Caco-2 (cell line): ENCODE measurements at regions of chr17 and their contacts with region 1.

Region 1: GRCh38 chr17:81927653-81928543 is at the start of gene MAFG:
- DNase-seq: peak; percentile 90 to 94
- H3K4me3 ChIP-seq: peak within 1 kb of the TSS; percentile 89
- H3K4me3 Mint-ChIP-seq: peak within 1 kb of the TSS; percentile 77
- H3K27ac Mint-ChIP-seq: peak within 1 kb of the TSS; percentile 85
- H3K4me1 ChIP-seq: peaks cover 14% of the 10 kb centered on the region
- H3K4me1 Mint-ChIP-seq: peaks cover 24% of the 10 kb centered on the region
- H3K27me3 ChIP-seq: no peaks in the 10 kb centered on the region
- H3K27me3 Mint-ChIP-seq: no peaks in the 10 kb centered on the region
- CTCF ChIP-seq: peak; percentile 22 to 26
- total RNA-seq, gene MAFG: 28.9 and 29.1 TPM in 2 replicates

Region 2: DNA sequence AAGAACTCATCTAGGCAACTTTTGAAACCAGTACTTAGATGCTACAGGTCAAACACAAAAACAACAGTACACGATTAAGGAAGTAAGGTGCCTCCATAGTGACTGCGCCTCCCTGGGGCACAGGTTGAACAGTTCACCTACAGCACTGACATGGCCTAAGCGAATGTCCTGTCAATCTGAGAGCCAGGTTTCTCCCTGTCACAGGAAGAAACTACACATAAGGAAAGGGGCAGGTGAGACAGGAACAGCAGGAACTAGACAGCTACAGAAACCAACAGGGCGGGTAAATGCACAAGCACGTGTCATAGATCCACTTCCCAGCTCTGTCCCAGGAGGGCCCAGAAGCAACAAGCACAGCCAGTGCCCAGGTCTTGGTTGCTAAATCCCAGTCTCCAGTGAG is 48.8 kb before region 1 on chr17:
- CTCF ChIA-PET with region 1: no interaction called
- POLR2A ChIA-PET with region 1: no interaction called
- intact Hi-C with region 1: no loop called
- DNase-seq: no peak
- H3K4me3 ChIP-seq: no peak overlapping the region
- H3K4me3 Mint-ChIP-seq: no peak overlapping the region
- H3K27ac Mint-ChIP-seq: no peak overlapping the region
- H3K4me1 ChIP-seq: no peaks in the 10 kb centered on the region
- H3K4me1 Mint-ChIP-seq: no peaks in the 10 kb centered on the region
- H3K27me3 ChIP-seq: no peaks in the 10 kb centered on the region
- H3K27me3 Mint-ChIP-seq: no peaks in the 10 kb centered on the region
- CTCF ChIP-seq: no peak

Region 3: DNA sequence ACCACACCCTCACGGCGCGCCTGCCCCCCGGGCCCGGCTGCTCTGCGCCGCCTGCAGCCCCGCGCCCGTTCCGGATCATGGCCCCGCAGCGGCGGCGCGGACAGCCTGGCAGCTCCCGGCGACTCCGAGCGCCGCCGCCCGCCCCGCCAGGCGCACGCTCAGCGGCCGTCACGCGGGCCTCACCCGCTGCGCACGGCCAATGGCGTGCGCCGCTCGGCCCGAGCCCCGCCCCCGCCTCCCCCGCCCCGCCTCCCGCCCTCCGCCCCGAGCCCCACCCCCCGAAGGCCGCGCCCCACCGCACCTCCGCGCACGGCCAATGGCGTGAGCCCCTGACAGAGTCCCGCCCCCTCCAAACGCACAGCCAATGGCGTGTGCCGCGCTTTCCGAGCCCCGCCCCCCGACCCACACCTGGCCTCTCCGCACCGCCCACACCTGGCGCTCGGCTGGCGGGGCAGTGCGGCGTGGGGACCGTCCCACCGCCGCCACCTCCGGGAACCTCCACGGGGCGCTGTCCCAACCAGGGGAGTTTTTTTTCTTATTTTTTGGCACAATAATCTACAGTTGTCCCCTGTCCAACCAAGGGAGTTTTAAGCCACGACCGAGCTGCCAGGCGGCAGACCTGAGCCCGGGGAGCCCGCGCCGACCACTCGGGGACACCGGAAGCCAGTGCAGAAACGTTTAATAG is 16.5 kb before region 1 on chr17 and contains the start of gene PCYT2:
- CTCF ChIA-PET with region 1: interaction called, 11 read pairs
- POLR2A ChIA-PET with region 1: interaction called, 7 read pairs
- intact Hi-C with region 1: loop called (anchors 2 kb)
- DNase-seq: peak; percentile 97 to 98
- H3K4me3 ChIP-seq: peak within 1 kb of the TSS; percentile 99
- H3K4me3 Mint-ChIP-seq: peak within 1 kb of the TSS; percentile 89
- H3K27ac Mint-ChIP-seq: peak within 1 kb of the TSS; percentile 94
- H3K4me1 ChIP-seq: peaks cover 19% of the 10 kb centered on the region
- H3K4me1 Mint-ChIP-seq: peaks cover 19% of the 10 kb centered on the region
- H3K27me3 ChIP-seq: no peaks in the 10 kb centered on the region
- H3K27me3 Mint-ChIP-seq: no peaks in the 10 kb centered on the region
- CTCF ChIP-seq: peak; percentile 31 to 45
- total RNA-seq, gene PCYT2: 125 and 151 TPM in 2 replicates

Region 4: GRCh38 chr17:81917565-81918332 is 10.1 kb before region 1 on chr17 and contains the start of gene SIRT7:
- CTCF ChIA-PET with region 1: interaction called, 11 read pairs
- POLR2A ChIA-PET with region 1: interaction called, 11 read pairs
- intact Hi-C with region 1: loop called (anchors 1 kb)
- DNase-seq: peak; percentile 77 to 84
- H3K4me3 ChIP-seq: peak within 1 kb of the TSS; percentile 86
- H3K4me3 Mint-ChIP-seq: peak within 1 kb of the TSS; percentile 93
- H3K27ac Mint-ChIP-seq: peak within 1 kb of the TSS; percentile 90
- H3K4me1 ChIP-seq: peaks cover 11% of the 10 kb centered on the region
- H3K4me1 Mint-ChIP-seq: peaks cover 28% of the 10 kb centered on the region
- H3K27me3 ChIP-seq: no peaks in the 10 kb centered on the region
- H3K27me3 Mint-ChIP-seq: no peaks in the 10 kb centered on the region
- CTCF ChIP-seq: no peak
- total RNA-seq, gene SIRT7: 55.6 and 57.4 TPM in 2 replicates

Region 5: DNA sequence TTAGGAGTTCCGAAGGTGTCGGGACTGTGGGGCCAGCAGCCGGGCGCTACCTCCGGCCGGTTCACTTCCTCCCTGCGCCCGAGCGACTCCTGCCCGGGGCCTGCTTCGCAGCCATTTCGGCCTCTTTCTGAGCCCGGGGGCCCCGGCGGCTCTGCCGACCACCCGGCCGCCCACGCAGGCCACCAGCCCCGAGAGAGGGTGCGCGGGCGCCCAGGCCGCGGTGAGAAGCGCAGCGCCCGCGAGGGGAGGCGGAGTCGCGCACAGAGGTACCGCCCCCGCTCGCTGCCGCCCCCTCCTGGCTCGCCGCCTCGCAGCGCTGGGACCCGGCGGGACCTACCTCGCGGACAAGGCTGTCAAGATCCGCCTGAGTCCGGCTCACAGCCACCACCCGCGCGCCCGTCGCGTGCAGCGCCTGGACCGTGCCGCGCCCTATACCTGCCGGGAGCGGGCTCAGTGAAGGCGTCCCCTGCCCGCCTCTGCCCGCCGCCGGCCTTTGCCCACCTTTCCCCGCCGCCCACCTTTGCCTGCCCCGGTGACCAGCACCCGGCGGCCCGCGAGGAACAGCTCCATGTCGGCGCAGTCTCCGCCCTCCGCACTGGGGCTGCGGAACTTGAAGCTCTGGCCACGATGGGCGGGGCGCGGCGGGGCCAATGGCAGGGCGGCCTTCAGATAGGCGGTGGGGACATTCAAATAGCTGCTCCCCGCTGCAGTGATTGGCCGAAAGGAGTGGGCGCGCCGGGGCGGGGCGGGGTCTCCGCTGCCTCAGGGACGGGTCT is 109.4 kb after region 1 on chr17 and contains the start of gene DCXR:
- CTCF ChIA-PET with region 1: interaction called, 10 read pairs
- POLR2A ChIA-PET with region 1: interaction called, 6 read pairs
- intact Hi-C with region 1: no loop called
- DNase-seq: peak; percentile 98 to 99
- H3K4me3 ChIP-seq: peak within 1 kb of the TSS; percentile 79
- H3K4me3 Mint-ChIP-seq: peak within 1 kb of the TSS; percentile 86
- H3K27ac Mint-ChIP-seq: peak within 1 kb of the TSS; percentile 91
- H3K4me1 ChIP-seq: peaks cover 21% of the 10 kb centered on the region
- H3K4me1 Mint-ChIP-seq: peaks cover 5% of the 10 kb centered on the region
- H3K27me3 ChIP-seq: no peaks in the 10 kb centered on the region
- H3K27me3 Mint-ChIP-seq: no peaks in the 10 kb centered on the region
- CTCF ChIP-seq: peak; percentile 80 to 87
- total RNA-seq, gene DCXR: 197 and 208 TPM in 2 replicates

Region 6: GRCh38 chr17:82138511-82138992 is 210.7 kb after region 1 on chr17:
- CTCF ChIA-PET with region 1: no interaction called
- POLR2A ChIA-PET with region 1: no interaction called
- intact Hi-C with region 1: no loop called
- DNase-seq: no peak
- H3K4me3 ChIP-seq: no peak overlapping the region
- H3K4me3 Mint-ChIP-seq: no peak overlapping the region
- H3K27ac Mint-ChIP-seq: no peak overlapping the region
- H3K4me1 ChIP-seq: no peaks in the 10 kb centered on the region
- H3K4me1 Mint-ChIP-seq: no peaks in the 10 kb centered on the region
- H3K27me3 ChIP-seq: no peaks in the 10 kb centered on the region
- H3K27me3 Mint-ChIP-seq: no peaks in the 10 kb centered on the region
- CTCF ChIP-seq: no peak

Region 7: GRCh38 chr17:82384730-82385481 is 457.0 kb after region 1 on chr17:
- CTCF ChIA-PET with region 1: no interaction called
- POLR2A ChIA-PET with region 1: interaction called, 10 read pairs
- intact Hi-C with region 1: no loop called
- DNase-seq: peak; percentile 67 to 72
- H3K4me3 ChIP-seq: no peak overlapping the region
- H3K4me3 Mint-ChIP-seq: no peak overlapping the region
- H3K27ac Mint-ChIP-seq: no peak overlapping the region
- H3K4me1 ChIP-seq: peaks cover 14% of the 10 kb centered on the region
- H3K4me1 Mint-ChIP-seq: no peaks in the 10 kb centered on the region
- H3K27me3 ChIP-seq: no peaks in the 10 kb centered on the region
- H3K27me3 Mint-ChIP-seq: no peaks in the 10 kb centered on the region
- CTCF ChIP-seq: peak; percentile 25 to 37

Region 8: DNA sequence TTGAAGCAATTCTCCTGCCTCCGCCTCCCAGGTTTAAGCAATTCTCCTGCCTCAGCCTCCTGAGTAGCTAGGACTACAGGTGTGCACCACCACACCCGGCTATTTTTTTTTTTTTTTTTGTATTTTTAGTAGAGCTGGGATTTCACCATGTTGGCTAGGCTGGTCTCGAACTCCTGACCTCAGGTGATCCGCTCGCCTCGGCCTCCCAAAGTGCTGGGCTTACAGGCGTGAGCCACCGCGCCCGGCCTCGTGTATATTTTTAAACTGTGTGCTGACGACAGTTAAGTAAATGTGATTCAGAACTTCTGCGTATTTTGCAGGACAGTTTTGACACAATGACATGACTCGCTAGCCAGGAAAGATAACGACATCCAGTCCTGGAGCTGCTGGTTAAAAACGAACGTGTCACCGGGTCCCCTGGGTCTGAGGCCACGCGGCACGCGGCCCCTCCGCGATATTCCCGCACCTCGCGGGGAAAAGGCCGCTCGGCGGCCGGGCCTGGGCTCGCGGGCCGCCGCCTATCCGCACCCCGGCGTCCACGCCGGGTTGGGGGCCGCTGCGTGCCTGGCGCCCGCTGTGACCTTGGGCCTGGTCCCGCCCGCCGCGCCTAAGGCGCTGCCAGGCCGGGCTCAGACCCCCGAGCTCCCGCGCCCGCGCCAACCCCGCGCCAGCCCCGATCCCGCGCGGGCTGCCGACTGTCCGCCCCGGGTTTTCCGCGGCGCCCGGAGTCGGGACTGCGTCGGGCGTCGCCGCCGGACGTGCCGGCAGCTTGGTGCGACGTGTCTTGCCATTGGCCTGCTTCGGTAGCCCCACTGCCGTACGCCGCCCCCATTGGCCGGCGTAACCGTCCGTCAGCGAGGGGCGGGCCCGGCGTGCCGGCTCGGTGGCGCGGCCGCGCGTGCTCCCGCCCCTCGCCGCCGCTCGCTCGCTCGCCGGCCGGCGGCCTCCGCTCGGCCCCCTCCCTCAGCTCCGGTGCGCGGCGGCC is 591.2 kb after region 1 on chr17 and contains the start of gene FOXK2:
- CTCF ChIA-PET with region 1: no interaction called
- POLR2A ChIA-PET with region 1: no interaction called
- intact Hi-C with region 1: loop called (anchors 5 kb)
- DNase-seq: peak; percentile 96 to 99
- H3K4me3 ChIP-seq: peak within 1 kb of the TSS; percentile 93
- H3K4me3 Mint-ChIP-seq: peak within 1 kb of the TSS; percentile 97
- H3K27ac Mint-ChIP-seq: peak within 1 kb of the TSS; percentile 94
- H3K4me1 ChIP-seq: peaks cover 20% of the 10 kb centered on the region
- H3K4me1 Mint-ChIP-seq: peaks cover 17% of the 10 kb centered on the region
- H3K27me3 ChIP-seq: no peaks in the 10 kb centered on the region
- H3K27me3 Mint-ChIP-seq: no peaks in the 10 kb centered on the region
- CTCF ChIP-seq: no peak
- total RNA-seq, gene FOXK2: 118 and 124 TPM in 2 replicates